Endothelial cell of umbilical vein (primary cell): ENCODE measurements at regions of chr1 and their contacts with region 1.

Region 1: GRCh38 chr1:110433803-110434202 is 17.1 kb upstream of the PROK1 start:
- DNase-seq: no peak
- H3K4me3 ChIP-seq: no peak overlapping the region
- H3K27ac ChIP-seq: no peak overlapping the region
- H3K4me1 ChIP-seq: no peaks in the 10 kb centered on the region
- H3K27me3 ChIP-seq: peaks cover 9 to 16% of the 10 kb centered on the region in 2 experiments
- CTCF ChIP-seq: no peak
- POLR2A ChIP-seq: no peak

Region 2: GRCh38 chr1:110144366-110144765 is 289.4 kb before region 1 on chr1:
- CTCF ChIA-PET with region 1: no interaction called
- POLR2A ChIA-PET with region 1: no interaction called
- dilution Hi-C with region 1: no loop called
- intact Hi-C with region 1: no loop called
- DNase-seq: no peak
- H3K4me3 ChIP-seq: no peak overlapping the region
- H3K27ac ChIP-seq: no peak overlapping the region
- H3K4me1 ChIP-seq: no peaks in the 10 kb centered on the region
- H3K27me3 ChIP-seq: peaks cover 8 to 24% of the 10 kb centered on the region in 2 experiments
- CTCF ChIP-seq: no peak
- POLR2A ChIP-seq: no peak

Region 3: GRCh38 chr1:110412576-110412975 is 21.2 kb before region 1 on chr1:
- CTCF ChIA-PET with region 1: interaction called, 23 read pairs
- POLR2A ChIA-PET with region 1: no interaction called
- dilution Hi-C with region 1: no loop called
- intact Hi-C with region 1: no loop called
- DNase-seq: peak; percentile 53
- H3K4me3 ChIP-seq: no peak overlapping the region
- H3K27ac ChIP-seq: no peak overlapping the region
- H3K4me1 ChIP-seq: peaks cover 4% of the 10 kb centered on the region
- H3K27me3 ChIP-seq: peaks cover 7 to 8% of the 10 kb centered on the region in 2 experiments
- CTCF ChIP-seq: peak; percentile 74 to 76
- POLR2A ChIP-seq: no peak